B cell (primary cell): ENCODE measurements at regions of chr12 and their contacts with region 1.

Region 1: DNA sequence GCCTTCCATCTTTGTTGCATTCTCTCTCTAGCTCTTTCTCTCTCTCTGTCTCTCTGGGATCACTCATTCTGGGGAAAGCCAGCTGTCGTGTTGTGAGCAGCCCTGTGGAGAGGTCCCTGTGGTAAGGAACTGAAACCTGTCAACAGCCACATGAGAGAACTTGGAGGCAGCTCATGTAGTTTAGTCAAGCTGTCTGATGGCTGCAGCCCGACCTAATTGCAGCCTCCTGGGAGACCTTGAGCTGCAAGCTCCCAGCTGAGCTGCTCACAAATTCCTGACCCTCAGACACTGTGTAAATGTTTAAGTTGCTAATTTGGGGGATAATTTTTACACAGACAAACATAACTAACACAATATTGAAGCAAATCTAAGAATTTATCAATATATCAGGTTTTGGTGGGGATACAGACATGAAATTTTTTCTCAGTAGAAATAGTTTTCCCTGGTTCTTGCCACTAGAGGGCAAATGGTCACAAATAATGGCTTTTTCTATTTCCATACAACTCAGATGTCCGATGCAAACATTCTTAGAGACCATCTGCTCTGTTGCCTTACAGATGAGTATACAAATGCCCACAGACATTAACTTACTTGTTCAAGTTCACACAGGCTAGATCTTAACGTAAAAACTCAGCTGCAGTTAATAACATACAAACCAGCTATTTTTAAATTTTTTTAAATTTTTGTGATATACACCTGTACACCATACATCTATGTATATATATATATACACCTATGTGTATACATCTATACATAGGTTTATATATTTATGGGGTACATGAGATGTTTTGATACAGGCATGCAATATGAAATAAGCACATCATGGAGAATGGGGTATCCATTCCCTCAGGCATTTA is 15.5 kb upstream of the KRR1 start:
- DNase-seq: peak; percentile 62
- ATAC-seq: peak; percentile 57
- H3K4me3 ChIP-seq: no peak overlapping the region
- H3K4me3 Mint-ChIP-seq: no peak overlapping the region
- H3K27ac ChIP-seq: no peak overlapping the region
- H3K27ac Mint-ChIP-seq: no peak overlapping the region
- H3K4me1 ChIP-seq: peaks cover 5 to 6% of the 10 kb centered on the region in 2 donors
- H3K4me1 Mint-ChIP-seq: peaks cover 4% of the 10 kb centered on the region
- H3K27me3 ChIP-seq: peaks cover 0 to 3% (median 0%) of the 10 kb centered on the region in 4 experiments
- H3K27me3 Mint-ChIP-seq: peaks cover 27% of the 10 kb centered on the region
- CTCF ChIP-seq: peak; percentile 82

Region 2: DNA sequence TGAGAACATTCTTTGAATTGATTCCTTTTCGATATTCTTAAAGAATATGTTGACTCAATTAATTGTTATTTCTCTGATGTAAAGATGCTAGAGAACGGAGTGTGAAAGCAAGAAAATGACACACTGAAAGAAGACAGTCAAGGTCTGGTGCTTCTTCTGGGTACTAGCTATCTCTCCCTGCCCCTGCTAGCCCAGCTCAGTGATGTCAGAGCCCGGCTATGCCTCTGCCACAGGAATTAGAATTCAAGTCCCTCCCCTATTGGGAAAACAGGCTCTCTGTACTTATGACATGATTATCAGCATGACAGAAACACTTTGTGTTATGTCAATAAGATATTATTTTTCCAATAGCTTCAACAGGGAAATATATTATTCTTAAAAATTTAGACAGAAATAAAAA is 569.7 kb before region 1 on chr12:
- CTCF ChIA-PET with region 1: no interaction called
- POLR2A ChIA-PET with region 1: no interaction called
- intact Hi-C with region 1: no loop called
- DNase-seq: no peak
- ATAC-seq: no peak
- H3K4me3 ChIP-seq: no peak overlapping the region
- H3K4me3 Mint-ChIP-seq: no peak overlapping the region
- H3K27ac ChIP-seq: no peak overlapping the region
- H3K27ac Mint-ChIP-seq: no peak overlapping the region
- H3K4me1 ChIP-seq: no peaks in the 10 kb centered on the region
- H3K4me1 Mint-ChIP-seq: no peaks in the 10 kb centered on the region
- H3K27me3 ChIP-seq: no peaks in the 10 kb centered on the region
- H3K27me3 Mint-ChIP-seq: no peaks in the 10 kb centered on the region
- CTCF ChIP-seq: no peak

Region 3: DNA sequence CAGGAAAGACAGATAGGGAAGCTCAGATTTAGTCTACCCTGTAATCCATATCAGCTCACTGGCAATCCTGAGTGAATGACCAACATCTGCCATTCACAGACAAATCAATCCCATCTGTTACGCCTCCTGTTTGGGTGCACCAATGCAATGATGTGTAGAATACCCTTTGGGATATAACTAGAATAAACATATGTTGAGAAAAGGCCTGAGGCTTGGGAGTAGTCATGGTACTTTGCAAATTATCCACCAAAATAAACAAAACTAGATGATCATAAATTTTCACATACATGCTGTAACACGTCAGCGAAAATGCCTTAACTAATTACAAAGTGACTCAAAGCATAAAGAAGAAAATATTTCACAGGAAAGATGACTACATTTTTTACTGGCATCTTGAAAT is 396.1 kb before region 1 on chr12:
- CTCF ChIA-PET with region 1: no interaction called
- POLR2A ChIA-PET with region 1: no interaction called
- intact Hi-C with region 1: no loop called
- DNase-seq: no peak
- ATAC-seq: no peak
- H3K4me3 ChIP-seq: no peak overlapping the region
- H3K4me3 Mint-ChIP-seq: no peak overlapping the region
- H3K27ac ChIP-seq: no peak overlapping the region
- H3K27ac Mint-ChIP-seq: no peak overlapping the region
- H3K4me1 ChIP-seq: no peaks in the 10 kb centered on the region
- H3K4me1 Mint-ChIP-seq: no peaks in the 10 kb centered on the region
- H3K27me3 ChIP-seq: no peaks in the 10 kb centered on the region
- H3K27me3 Mint-ChIP-seq: no peaks in the 10 kb centered on the region
- CTCF ChIP-seq: no peak

Region 4: GRCh38 chr12:75511116-75512048 is 15.5 kb before region 1 on chr12 and contains the start of gene KRR1:
- CTCF ChIA-PET with region 1: interaction called, 10 read pairs
- POLR2A ChIA-PET with region 1: no interaction called
- intact Hi-C with region 1: no loop called
- DNase-seq: peak; percentile 95
- ATAC-seq: peak; percentile 97
- H3K4me3 ChIP-seq: peak within 1 kb of the TSS; percentile 61 to 100 (median 93)
- H3K4me3 Mint-ChIP-seq: peak within 1 kb of the TSS; percentile 93
- H3K27ac ChIP-seq: peak within 1 kb of the TSS; percentile 72 to 83
- H3K27ac Mint-ChIP-seq: peak within 1 kb of the TSS; percentile 95
- H3K4me1 ChIP-seq: peaks cover 11 to 18% of the 10 kb centered on the region in 2 donors
- H3K4me1 Mint-ChIP-seq: peaks cover 28% of the 10 kb centered on the region
- H3K27me3 ChIP-seq: no peaks in the 10 kb centered on the region
- H3K27me3 Mint-ChIP-seq: no peaks in the 10 kb centered on the region
- CTCF ChIP-seq: no peak
- total RNA-seq, gene KRR1: 80.2 and 87.7 TPM in 2 replicates

Region 5: DNA sequence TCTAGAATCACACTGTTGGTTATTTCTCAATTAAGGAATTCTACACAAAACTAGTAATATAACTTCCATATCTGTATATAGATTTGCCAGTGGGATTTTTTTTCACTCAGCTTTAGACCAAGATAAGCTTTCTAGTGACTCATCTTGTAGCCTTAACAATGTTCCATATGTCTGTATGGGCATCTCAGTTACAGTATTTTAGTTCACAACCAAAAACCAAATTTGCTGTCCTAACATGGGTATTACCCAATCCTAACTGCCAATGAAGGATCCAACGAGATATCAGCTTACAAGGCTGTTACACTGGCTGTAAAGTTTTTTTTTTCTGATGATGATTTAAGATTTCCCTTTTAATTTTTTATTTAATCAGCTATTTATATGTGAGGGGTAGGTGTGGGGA is 16.1 kb after region 1 on chr12:
- CTCF ChIA-PET with region 1: interaction called, 11 read pairs
- POLR2A ChIA-PET with region 1: no interaction called
- intact Hi-C with region 1: no loop called
- DNase-seq: no peak
- ATAC-seq: no peak
- H3K4me3 ChIP-seq: no peak overlapping the region
- H3K4me3 Mint-ChIP-seq: no peak overlapping the region
- H3K27ac ChIP-seq: no peak overlapping the region
- H3K27ac Mint-ChIP-seq: no peak overlapping the region
- H3K4me1 ChIP-seq: no peaks in the 10 kb centered on the region
- H3K4me1 Mint-ChIP-seq: no peaks in the 10 kb centered on the region
- H3K27me3 ChIP-seq: peaks cover 0 to 7% (median 0%) of the 10 kb centered on the region in 4 experiments
- H3K27me3 Mint-ChIP-seq: peaks cover 24% of the 10 kb centered on the region
- CTCF ChIP-seq: no peak

Region 6: GRCh38 chr12:75837700-75838099 is 310.8 kb after region 1 on chr12:
- CTCF ChIA-PET with region 1: no interaction called
- POLR2A ChIA-PET with region 1: no interaction called
- intact Hi-C with region 1: no loop called
- DNase-seq: no peak
- ATAC-seq: no peak
- H3K4me3 ChIP-seq: no peak overlapping the region
- H3K4me3 Mint-ChIP-seq: no peak overlapping the region
- H3K27ac ChIP-seq: no peak overlapping the region
- H3K27ac Mint-ChIP-seq: no peak overlapping the region
- H3K4me1 ChIP-seq: no peaks in the 10 kb centered on the region
- H3K4me1 Mint-ChIP-seq: no peaks in the 10 kb centered on the region
- H3K27me3 ChIP-seq: no peaks in the 10 kb centered on the region
- H3K27me3 Mint-ChIP-seq: peaks cover 30% of the 10 kb centered on the region
- CTCF ChIP-seq: no peak

Region 7: DNA sequence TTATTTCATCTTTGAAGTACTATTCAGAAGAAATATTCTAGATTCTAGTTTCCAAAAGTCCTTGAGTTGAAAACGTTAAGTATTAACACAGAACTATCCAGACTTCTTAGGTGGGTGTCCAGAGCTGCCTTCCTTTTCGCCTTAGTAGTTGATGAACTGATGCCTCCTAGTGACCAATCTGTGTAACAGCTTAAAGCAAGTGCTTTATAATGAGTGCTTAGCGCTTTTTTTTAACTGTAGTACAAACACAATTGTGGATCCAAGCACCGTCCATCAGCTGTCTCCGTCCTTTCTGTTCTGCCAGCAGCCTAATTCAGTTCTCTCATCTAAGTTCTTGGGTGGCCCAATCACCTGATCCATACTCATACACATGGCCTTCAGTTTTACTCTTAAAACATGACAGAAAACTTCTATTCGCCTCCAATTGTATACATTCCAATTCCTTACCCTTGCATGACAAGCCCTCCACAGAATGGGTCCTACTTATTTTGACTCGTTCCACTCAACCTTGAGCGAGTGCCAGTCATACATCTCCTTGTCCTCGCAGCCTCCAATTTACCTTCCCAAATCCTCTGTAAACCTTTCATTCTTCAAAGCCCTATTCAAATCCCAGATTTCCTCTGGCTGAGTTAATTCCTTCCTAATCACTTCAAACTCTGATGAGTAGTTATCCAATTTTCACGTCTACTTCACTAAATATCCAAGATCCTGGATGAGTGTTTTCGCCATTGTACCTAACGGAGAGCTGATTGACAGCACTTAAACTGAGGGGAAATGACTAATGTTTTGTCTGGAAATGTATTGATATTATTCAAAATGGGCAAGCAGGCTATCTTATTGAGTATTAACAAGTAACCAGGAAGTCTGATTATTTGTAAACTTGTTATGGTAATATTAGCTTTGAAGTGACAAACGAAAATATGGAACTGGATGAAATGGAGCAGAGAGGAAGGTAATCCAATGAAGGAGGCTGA is 510.5 kb after region 1 on chr12:
- CTCF ChIA-PET with region 1: interaction called, 210 read pairs
- POLR2A ChIA-PET with region 1: no interaction called
- intact Hi-C with region 1: loop called (anchors 1 kb)
- DNase-seq: peak; percentile 76
- ATAC-seq: peak; percentile 71
- H3K4me3 ChIP-seq: no peak overlapping the region
- H3K4me3 Mint-ChIP-seq: no peak overlapping the region
- H3K27ac ChIP-seq: no peak overlapping the region
- H3K27ac Mint-ChIP-seq: no peak overlapping the region
- H3K4me1 ChIP-seq: peaks cover 3 to 4% of the 10 kb centered on the region in 2 donors
- H3K4me1 Mint-ChIP-seq: peaks cover 9% of the 10 kb centered on the region
- H3K27me3 ChIP-seq: no peaks in the 10 kb centered on the region
- H3K27me3 Mint-ChIP-seq: no peaks in the 10 kb centered on the region
- CTCF ChIP-seq: peak; percentile 85

Region 8: DNA sequence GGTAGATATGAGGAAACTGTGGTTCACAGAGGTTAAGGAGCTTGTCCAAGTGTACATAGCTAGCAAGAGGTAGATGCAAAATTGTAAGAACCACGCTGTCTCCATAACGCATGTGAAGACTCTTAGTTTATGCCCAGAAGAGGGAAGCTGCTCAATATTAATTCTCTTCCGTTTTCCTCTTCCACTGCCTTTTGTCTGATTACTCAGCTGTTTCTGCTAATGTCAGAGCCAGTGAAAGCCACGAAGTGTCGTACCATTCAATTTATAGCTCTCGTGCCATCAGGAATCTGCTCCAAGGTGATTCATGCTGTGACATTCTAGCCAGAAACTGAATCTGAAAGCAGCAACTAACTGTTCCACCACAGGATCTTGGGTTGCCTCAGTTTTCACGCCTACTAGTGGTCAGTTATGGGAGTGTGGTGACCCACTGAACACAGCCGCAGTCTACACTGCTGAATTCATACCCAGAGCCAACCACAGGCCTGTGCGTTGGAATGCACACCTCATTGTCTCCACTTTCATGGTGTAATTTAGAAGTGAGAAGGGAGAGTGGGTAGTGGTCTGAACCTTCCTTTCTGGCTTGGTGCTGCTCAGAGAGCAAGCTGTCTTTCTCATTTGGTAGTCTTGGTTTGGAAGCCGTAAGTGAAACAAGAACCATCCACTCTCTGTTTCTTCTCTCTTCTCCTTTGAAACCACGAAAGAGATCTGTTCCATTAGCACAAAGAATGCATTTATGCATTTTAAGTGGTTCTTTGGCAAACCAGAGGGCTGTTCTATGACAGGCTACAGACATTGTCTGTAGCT is 631.8 kb after region 1 on chr12:
- CTCF ChIA-PET with region 1: no interaction called
- POLR2A ChIA-PET with region 1: no interaction called
- intact Hi-C with region 1: loop called (anchors 10 kb)
- DNase-seq: peak; percentile 82
- ATAC-seq: peak; percentile 99
- H3K4me3 ChIP-seq: peak overlapping the region; percentile 5 to 68 (median 45)
- H3K4me3 Mint-ChIP-seq: peak overlapping the region; percentile 91
- H3K27ac ChIP-seq: peak overlapping the region; percentile 14 to 76
- H3K27ac Mint-ChIP-seq: peak overlapping the region; percentile 94
- H3K4me1 ChIP-seq: peaks cover 9 to 16% of the 10 kb centered on the region in 2 donors
- H3K4me1 Mint-ChIP-seq: peaks cover 25% of the 10 kb centered on the region
- H3K27me3 ChIP-seq: no peaks in the 10 kb centered on the region
- H3K27me3 Mint-ChIP-seq: no peaks in the 10 kb centered on the region
- CTCF ChIP-seq: peak; percentile 83

Region 9: DNA sequence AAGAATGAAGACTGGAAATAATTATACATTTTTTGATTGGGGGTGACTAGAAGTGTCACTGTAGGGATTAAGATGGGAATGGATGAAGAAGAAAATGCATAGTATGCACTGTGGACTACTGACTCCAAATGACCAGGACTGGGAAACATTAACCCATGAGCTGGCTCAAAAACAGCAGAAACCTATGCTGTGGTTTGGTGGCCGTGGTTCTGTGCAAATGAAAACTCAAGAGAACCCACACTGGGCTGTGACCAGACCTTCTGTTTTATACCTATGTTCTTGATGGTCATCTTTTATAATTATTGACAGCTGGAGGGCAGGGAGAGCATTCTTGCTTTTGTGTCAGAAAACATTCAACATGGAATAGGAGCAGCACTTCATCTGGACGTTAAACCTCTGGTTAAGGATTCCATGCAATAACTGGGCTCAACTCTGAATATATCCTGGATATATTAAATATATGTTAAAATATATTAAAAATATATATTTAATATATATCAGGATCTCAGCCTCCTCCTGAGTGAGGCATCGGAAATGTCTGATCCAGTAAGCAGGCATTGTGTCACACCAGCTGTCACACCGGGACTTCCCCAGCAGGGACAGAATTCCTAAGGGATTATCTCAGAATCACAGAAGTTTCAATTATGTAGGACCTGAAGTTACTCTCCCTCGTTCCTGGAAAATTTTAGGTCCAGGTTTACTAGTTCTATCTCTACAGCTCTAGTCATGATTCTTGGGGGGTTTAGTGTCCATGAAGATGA is 772.8 kb after region 1 on chr12:
- CTCF ChIA-PET with region 1: no interaction called
- POLR2A ChIA-PET with region 1: no interaction called
- intact Hi-C with region 1: no loop called
- DNase-seq: no peak
- ATAC-seq: no peak
- H3K4me3 ChIP-seq: no peak overlapping the region
- H3K4me3 Mint-ChIP-seq: no peak overlapping the region
- H3K27ac ChIP-seq: no peak overlapping the region
- H3K27ac Mint-ChIP-seq: no peak overlapping the region
- H3K4me1 ChIP-seq: no peaks in the 10 kb centered on the region
- H3K4me1 Mint-ChIP-seq: no peaks in the 10 kb centered on the region
- H3K27me3 ChIP-seq: no peaks in the 10 kb centered on the region
- H3K27me3 Mint-ChIP-seq: no peaks in the 10 kb centered on the region
- CTCF ChIP-seq: no peak

Region 10: GRCh38 chr12:76455582-76456345 is 928.9 kb after region 1 on chr12:
- CTCF ChIA-PET with region 1: interaction called, 25 read pairs
- POLR2A ChIA-PET with region 1: no interaction called
- intact Hi-C with region 1: loop called (anchors 1 kb)
- DNase-seq: peak; percentile 50
- ATAC-seq: peak; percentile 41
- H3K4me3 ChIP-seq: no peak overlapping the region
- H3K4me3 Mint-ChIP-seq: no peak overlapping the region
- H3K27ac ChIP-seq: no peak overlapping the region
- H3K27ac Mint-ChIP-seq: no peak overlapping the region
- H3K4me1 ChIP-seq: peaks cover 0 to 4% of the 10 kb centered on the region in 2 donors
- H3K4me1 Mint-ChIP-seq: peaks cover 13% of the 10 kb centered on the region
- H3K27me3 ChIP-seq: no peaks in the 10 kb centered on the region
- H3K27me3 Mint-ChIP-seq: no peaks in the 10 kb centered on the region
- CTCF ChIP-seq: peak; percentile 70

Region 11: DNA sequence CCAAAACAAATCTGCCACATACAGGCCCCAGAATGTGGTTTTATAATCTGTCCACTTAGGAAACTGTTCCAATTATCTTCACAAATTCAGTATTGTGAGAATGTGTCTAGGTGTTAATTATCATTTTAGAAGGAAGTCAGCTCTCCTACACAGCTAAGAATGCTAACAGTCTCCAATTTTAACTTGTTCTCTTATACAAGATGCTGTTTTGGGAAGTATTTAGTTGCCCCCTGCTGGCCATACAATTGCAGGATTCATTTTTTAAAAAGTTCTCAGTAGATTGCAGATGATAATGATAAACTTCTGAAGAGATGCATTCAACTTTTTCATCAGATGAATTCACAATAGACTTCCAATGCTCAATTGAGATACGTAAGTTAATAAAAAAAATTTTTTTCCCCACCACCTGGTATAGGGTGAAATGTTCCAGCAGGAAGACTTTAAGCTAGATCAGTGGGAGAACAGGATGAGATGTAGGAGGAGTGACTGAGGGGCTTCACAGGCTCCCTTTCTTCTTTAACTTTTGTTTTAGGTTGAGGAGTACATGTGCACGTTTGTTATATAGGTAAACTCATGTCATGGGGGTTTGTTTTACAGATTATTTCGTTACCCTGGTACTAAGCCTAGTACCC is 1060.0 kb after region 1 on chr12:
- CTCF ChIA-PET with region 1: interaction called, 33 read pairs
- POLR2A ChIA-PET with region 1: no interaction called
- intact Hi-C with region 1: no loop called
- DNase-seq: peak; percentile 69
- ATAC-seq: peak; percentile 57
- H3K4me3 ChIP-seq: no peak overlapping the region
- H3K4me3 Mint-ChIP-seq: no peak overlapping the region
- H3K27ac ChIP-seq: no peak overlapping the region
- H3K27ac Mint-ChIP-seq: no peak overlapping the region
- H3K4me1 ChIP-seq: no peaks in the 10 kb centered on the region
- H3K4me1 Mint-ChIP-seq: peaks cover 5% of the 10 kb centered on the region
- H3K27me3 ChIP-seq: no peaks in the 10 kb centered on the region
- H3K27me3 Mint-ChIP-seq: no peaks in the 10 kb centered on the region
- CTCF ChIP-seq: peak; percentile 92